CD8-positive, alpha-beta T cell (primary cell): ENCODE measurements at regions of chr6 and their contacts with region 1.

Region 1: GRCh38 chr6:13614926-13615798 is at the start of gene NOL7:
- DNase-seq: peak; percentile 96 to 99 (median 99)
- ATAC-seq: peak; percentile 93
- H3K4me3 ChIP-seq: peak within 1 kb of the TSS; percentile 86 to 97
- H3K4me3 Mint-ChIP-seq: peak within 1 kb of the TSS; percentile 99
- H3K27ac ChIP-seq: peak within 1 kb of the TSS; percentile 83 to 88
- H3K27ac Mint-ChIP-seq: peak within 1 kb of the TSS; percentile 98
- H3K4me1 ChIP-seq: peaks cover 28% of the 10 kb centered on the region
- H3K4me1 Mint-ChIP-seq: peaks cover 39% of the 10 kb centered on the region
- H3K27me3 ChIP-seq: no peaks in the 10 kb centered on the region
- H3K27me3 Mint-ChIP-seq: no peaks in the 10 kb centered on the region
- CTCF ChIP-seq: peak; percentile 94
- total RNA-seq, gene NOL7: 70.5 to 71.1 TPM

Region 2: DNA sequence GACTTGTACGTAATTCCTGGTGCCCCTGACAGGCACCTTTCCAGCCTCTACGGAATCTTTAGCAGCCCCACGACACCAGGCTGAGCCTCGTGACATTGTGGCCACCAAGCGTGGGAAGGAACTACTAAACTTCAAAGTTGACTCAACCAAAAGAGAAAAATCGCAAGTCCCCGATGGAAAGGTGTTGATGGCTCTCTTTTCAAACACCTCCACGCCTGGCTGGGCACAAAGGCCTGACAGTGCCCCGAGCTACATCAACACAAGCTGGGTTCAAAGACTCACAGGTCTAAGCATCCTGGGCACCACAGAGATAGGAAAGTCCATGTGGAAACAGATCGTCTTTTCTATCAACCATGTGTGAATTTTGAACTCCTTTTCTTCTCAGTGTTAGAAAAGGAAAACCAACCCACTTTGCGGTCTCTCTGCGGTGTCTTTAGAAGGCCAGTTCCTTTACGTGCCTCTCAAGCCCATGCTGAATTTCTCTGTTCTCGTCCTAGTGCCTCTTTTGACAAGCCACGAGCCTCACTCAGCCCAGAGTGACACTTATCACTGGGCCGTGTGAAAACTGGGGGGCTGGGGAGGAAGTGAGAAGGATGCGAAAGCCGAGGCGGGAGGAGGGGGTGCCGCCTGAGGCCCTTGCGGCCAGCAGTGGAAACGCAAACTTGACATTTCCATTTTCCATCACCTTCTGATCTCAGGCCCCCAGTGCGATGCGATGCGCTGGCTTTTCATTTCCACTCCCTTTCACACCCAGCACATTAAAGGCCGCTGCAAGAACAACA is 187.2 kb before region 1 on chr6:
- CTCF ChIA-PET with region 1: interaction called, 3 read pairs
- POLR2A ChIA-PET with region 1: interaction called, 3 read pairs
- intact Hi-C with region 1: loop called in 1 of 2 experiments (anchors 5 kb)
- DNase-seq: peak; percentile 25 to 92 (median 68)
- ATAC-seq: peak; percentile 80
- H3K4me3 ChIP-seq: peak overlapping the region; percentile 1 to 19
- H3K4me3 Mint-ChIP-seq: peak overlapping the region; percentile 70
- H3K27ac ChIP-seq: peak overlapping the region; percentile 8 to 89
- H3K27ac Mint-ChIP-seq: peak overlapping the region; percentile 89
- H3K4me1 ChIP-seq: peaks cover 26% of the 10 kb centered on the region
- H3K4me1 Mint-ChIP-seq: peaks cover 61% of the 10 kb centered on the region
- H3K27me3 ChIP-seq: no peaks in the 10 kb centered on the region
- H3K27me3 Mint-ChIP-seq: no peaks in the 10 kb centered on the region
- CTCF ChIP-seq: peak; percentile 25

Region 3: GRCh38 chr6:13630499-13630898 is 15.3 kb after region 1 on chr6:
- CTCF ChIA-PET with region 1: interaction called, 12 read pairs
- POLR2A ChIA-PET with region 1: interaction called, 17 read pairs
- intact Hi-C with region 1: no loop called
- DNase-seq: no peak
- ATAC-seq: no peak
- H3K4me3 ChIP-seq: no peak overlapping the region
- H3K4me3 Mint-ChIP-seq: no peak overlapping the region
- H3K27ac ChIP-seq: no peak overlapping the region
- H3K27ac Mint-ChIP-seq: no peak overlapping the region
- H3K4me1 ChIP-seq: no peaks in the 10 kb centered on the region
- H3K4me1 Mint-ChIP-seq: peaks cover 11% of the 10 kb centered on the region
- H3K27me3 ChIP-seq: no peaks in the 10 kb centered on the region
- H3K27me3 Mint-ChIP-seq: no peaks in the 10 kb centered on the region
- CTCF ChIP-seq: no peak

Region 4: GRCh38 chr6:13767121-13767808 is 152.1 kb after region 1 on chr6:
- CTCF ChIA-PET with region 1: interaction called, 4 read pairs
- POLR2A ChIA-PET with region 1: interaction called, 4 read pairs
- intact Hi-C with region 1: loop called (anchors 2 kb)
- DNase-seq: peak; percentile 11 to 77 (median 53)
- ATAC-seq: peak; percentile 83
- H3K4me3 ChIP-seq: peak overlapping the region; percentile 16 to 21
- H3K4me3 Mint-ChIP-seq: peak overlapping the region; percentile 73
- H3K27ac ChIP-seq: no peak overlapping the region
- H3K27ac Mint-ChIP-seq: no peak overlapping the region
- H3K4me1 ChIP-seq: peaks cover 18% of the 10 kb centered on the region
- H3K4me1 Mint-ChIP-seq: peaks cover 33% of the 10 kb centered on the region
- H3K27me3 ChIP-seq: no peaks in the 10 kb centered on the region
- H3K27me3 Mint-ChIP-seq: no peaks in the 10 kb centered on the region
- CTCF ChIP-seq: peak; percentile 10

Region 5: DNA sequence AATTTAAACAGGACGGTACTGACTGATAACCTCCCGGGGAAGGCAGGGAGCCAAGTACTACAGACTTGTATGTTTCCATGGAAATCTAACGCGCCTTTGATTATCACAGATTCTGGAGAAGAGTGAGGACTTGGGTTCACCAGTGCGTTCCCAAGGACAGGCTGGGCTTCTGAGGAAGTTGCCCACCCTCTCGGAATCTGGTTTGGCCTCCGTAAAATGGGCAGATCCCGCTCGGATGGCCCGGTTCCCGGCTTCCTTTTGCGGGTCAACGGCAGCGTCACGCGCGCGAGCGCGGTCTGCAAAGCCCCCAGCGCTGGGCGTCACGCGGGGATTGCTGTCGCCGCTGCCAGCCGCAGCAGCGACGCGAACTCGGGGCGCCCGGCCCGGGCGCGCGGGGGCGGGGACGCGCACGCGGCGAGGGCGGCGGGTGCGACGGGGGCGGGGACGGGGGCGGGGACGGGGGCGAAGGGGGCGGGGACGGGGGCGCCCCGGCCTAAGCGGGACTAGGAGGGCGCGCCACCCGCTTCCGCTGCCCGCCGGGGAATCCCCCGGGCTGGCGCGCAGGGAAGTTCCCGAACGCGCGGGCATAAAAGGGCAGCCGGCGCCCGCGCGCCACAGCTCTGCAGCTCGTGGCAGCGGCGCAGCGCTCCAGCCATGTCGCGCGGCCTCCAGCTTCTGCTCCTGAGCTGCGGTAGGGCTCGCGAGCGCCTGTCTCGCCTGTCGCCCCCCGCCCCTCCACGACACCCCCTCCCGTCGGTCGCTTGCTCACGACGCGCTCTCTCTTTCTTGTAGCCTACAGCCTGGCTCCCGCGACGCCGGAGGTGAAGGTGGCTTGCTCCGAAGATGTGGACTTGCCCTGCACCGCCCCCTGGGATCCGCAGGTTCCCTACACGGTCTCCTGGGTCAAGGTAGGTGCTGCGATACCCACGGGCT is 502.3 kb after region 1 on chr6 and contains the start of gene CD83:
- CTCF ChIA-PET with region 1: no interaction called
- POLR2A ChIA-PET with region 1: no interaction called
- intact Hi-C with region 1: loop called in 1 of 2 experiments (anchors 5 kb)
- DNase-seq: peak; percentile 72 to 97 (median 84)
- ATAC-seq: peak; percentile 94
- H3K4me3 ChIP-seq: peak within 1 kb of the TSS; percentile 90 to 92
- H3K4me3 Mint-ChIP-seq: peak within 1 kb of the TSS; percentile 93
- H3K27ac ChIP-seq: peak within 1 kb of the TSS; percentile 66 to 81
- H3K27ac Mint-ChIP-seq: peak within 1 kb of the TSS; percentile 96
- H3K4me1 ChIP-seq: peaks cover 8% of the 10 kb centered on the region
- H3K4me1 Mint-ChIP-seq: peaks cover 39% of the 10 kb centered on the region
- H3K27me3 ChIP-seq: no peaks in the 10 kb centered on the region
- H3K27me3 Mint-ChIP-seq: no peaks in the 10 kb centered on the region
- CTCF ChIP-seq: no peak
- total RNA-seq, gene CD83: 57.2 to 60.4 TPM